B cell (primary cell): ENCODE measurements at regions of chr14 and their contacts with region 1.

Region 1: DNA sequence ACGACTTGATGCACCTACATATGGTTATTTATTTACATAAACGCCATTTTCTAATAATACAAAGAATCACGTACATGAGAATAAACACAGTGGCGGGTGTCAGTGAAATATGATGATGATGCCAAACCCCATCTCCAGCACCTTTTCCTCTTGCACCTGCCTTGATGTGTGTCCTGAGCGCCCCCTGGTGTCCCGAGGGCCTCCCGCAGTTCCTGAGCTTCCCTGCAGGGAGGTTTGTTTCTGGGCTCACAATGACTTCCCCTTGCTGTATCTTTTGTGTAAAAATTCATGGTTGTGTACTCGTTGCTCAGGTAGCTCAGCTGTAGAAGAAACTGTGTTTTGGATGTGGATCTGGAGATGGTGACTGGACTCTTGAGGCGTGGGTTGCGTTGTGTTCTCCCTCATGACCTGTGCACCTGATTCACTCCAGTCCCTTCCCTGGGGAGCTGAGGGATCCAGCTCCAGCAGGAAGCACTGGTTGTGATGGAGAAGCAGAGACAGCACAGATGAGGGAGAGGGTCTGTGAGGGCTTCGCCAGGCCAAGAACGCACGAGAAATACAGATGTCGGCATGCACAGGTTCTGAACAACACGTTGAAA is 1037.8 kb downstream of the TMEM121 start:
- DNase-seq: peak; percentile 82
- ATAC-seq: peak; percentile 73
- H3K4me3 ChIP-seq: no peak overlapping the region
- H3K4me3 Mint-ChIP-seq: no peak overlapping the region
- H3K27ac ChIP-seq: no peak overlapping the region
- H3K27ac Mint-ChIP-seq: peak overlapping the region; percentile 34
- H3K4me1 ChIP-seq: no peaks in the 10 kb centered on the region
- H3K4me1 Mint-ChIP-seq: peaks cover 3% of the 10 kb centered on the region
- H3K27me3 ChIP-seq: peaks cover 0 to under 1% (median 0%) of the 10 kb centered on the region in 4 experiments
- H3K27me3 Mint-ChIP-seq: peaks cover 12% of the 10 kb centered on the region
- CTCF ChIP-seq: peak; percentile 74

Region 2: GRCh38 chr14:106538201-106538600 is 26.0 kb before region 1 on chr14:
- CTCF ChIA-PET with region 1: interaction called, 38 read pairs
- POLR2A ChIA-PET with region 1: no interaction called
- intact Hi-C with region 1: no loop called
- DNase-seq: peak; percentile 54
- ATAC-seq: no peak
- H3K4me3 ChIP-seq: peak overlapping the region in 1 of 5 experiments; percentile 30
- H3K4me3 Mint-ChIP-seq: peak overlapping the region; percentile 60
- H3K27ac ChIP-seq: peak overlapping the region; percentile 57 to 85
- H3K27ac Mint-ChIP-seq: peak overlapping the region; percentile 85
- H3K4me1 ChIP-seq: peaks cover 33 to 36% of the 10 kb centered on the region in 2 donors
- H3K4me1 Mint-ChIP-seq: peaks cover 43% of the 10 kb centered on the region
- H3K27me3 ChIP-seq: peaks cover 0 to 5% (median 1%) of the 10 kb centered on the region in 4 experiments
- H3K27me3 Mint-ChIP-seq: peaks cover 10% of the 10 kb centered on the region
- CTCF ChIP-seq: no peak

Region 3: DNA sequence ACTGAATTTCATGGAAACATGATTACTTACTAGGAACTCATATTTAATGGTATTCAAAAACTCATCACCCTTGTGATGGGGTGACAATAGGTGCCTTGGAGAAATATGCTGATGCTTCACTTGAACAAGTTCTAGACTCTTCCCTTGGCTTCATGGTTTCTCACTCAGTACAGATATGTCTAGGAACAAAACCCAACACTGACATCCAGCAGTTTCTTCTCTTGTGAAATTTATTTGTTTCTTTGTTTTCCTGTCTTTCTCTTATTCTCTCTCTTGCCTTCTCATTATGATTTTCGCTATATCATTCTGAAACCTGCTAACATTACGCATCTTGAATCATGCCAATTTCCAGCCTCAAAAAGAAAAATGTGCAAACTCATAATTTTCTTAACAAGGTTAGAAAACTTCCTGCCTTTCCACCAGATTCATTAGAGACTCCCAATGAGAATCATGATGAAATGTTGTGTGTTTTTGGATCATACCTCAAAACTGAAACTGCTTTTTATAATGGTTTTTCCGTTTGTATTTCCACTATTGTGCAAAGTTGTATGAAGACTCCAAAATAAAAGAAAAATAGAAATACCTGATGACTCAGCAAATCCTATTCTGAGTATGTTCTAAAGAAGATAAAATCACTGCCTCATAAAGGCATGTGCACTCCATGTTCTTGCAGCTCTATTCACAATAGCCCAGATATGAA is 16.3 kb before region 1 on chr14:
- CTCF ChIA-PET with region 1: interaction called, 32 read pairs
- POLR2A ChIA-PET with region 1: no interaction called
- intact Hi-C with region 1: no loop called
- DNase-seq: no peak
- ATAC-seq: no peak
- H3K4me3 ChIP-seq: no peak overlapping the region
- H3K4me3 Mint-ChIP-seq: no peak overlapping the region
- H3K27ac ChIP-seq: no peak overlapping the region
- H3K27ac Mint-ChIP-seq: no peak overlapping the region
- H3K4me1 ChIP-seq: no peaks in the 10 kb centered on the region
- H3K4me1 Mint-ChIP-seq: peaks cover 7% of the 10 kb centered on the region
- H3K27me3 ChIP-seq: no peaks in the 10 kb centered on the region
- H3K27me3 Mint-ChIP-seq: peaks cover 13% of the 10 kb centered on the region
- CTCF ChIP-seq: no peak

Region 4: GRCh38 chr14:106578481-106578880 is 14.3 kb after region 1 on chr14:
- CTCF ChIA-PET with region 1: interaction called, 18 read pairs
- POLR2A ChIA-PET with region 1: no interaction called
- intact Hi-C with region 1: no loop called
- DNase-seq: peak; percentile 52
- ATAC-seq: peak; percentile 93
- H3K4me3 ChIP-seq: peak overlapping the region in 4 of 5 experiments; percentile 26 to 38 (median 31)
- H3K4me3 Mint-ChIP-seq: peak overlapping the region; percentile 73
- H3K27ac ChIP-seq: peak overlapping the region; percentile 33 to 34
- H3K27ac Mint-ChIP-seq: peak overlapping the region; percentile 24
- H3K4me1 ChIP-seq: peaks cover 17 to 22% of the 10 kb centered on the region in 2 donors
- H3K4me1 Mint-ChIP-seq: peaks cover 30% of the 10 kb centered on the region
- H3K27me3 ChIP-seq: peaks cover 0 to 12% (median 5%) of the 10 kb centered on the region in 4 experiments
- H3K27me3 Mint-ChIP-seq: peaks cover 5% of the 10 kb centered on the region
- CTCF ChIP-seq: no peak

Region 5: DNA sequence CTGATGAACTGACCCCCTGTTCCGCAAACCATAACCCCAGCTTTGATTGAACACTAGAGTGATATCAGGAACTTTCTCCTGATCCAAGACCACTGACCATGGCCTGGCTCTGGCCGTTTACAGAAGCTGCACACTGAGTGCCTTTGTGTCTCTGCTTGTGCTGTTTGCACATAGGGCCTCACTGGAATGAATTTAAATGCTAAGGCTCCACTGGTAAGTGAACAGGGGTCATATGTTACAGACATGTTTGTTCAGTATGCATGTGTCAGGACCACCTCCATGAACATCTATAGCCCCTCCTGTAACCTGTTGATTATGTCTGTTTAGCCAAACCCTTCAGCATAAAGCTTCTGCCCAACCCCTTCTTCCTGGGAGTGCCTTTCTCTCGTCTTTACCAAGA is 202.0 kb after region 1 on chr14:
- CTCF ChIA-PET with region 1: no interaction called
- POLR2A ChIA-PET with region 1: no interaction called
- intact Hi-C with region 1: no loop called
- DNase-seq: no peak
- ATAC-seq: no peak
- H3K4me3 ChIP-seq: no peak overlapping the region
- H3K4me3 Mint-ChIP-seq: no peak overlapping the region
- H3K27ac ChIP-seq: no peak overlapping the region
- H3K27ac Mint-ChIP-seq: no peak overlapping the region
- H3K4me1 ChIP-seq: peaks cover 23 to 28% of the 10 kb centered on the region in 2 donors
- H3K4me1 Mint-ChIP-seq: peaks cover 26% of the 10 kb centered on the region
- H3K27me3 ChIP-seq: peaks cover 0 to 5% (median 0%) of the 10 kb centered on the region in 4 experiments
- H3K27me3 Mint-ChIP-seq: peaks cover 12% of the 10 kb centered on the region
- CTCF ChIP-seq: no peak